ENCODE measurements at regions of chr2 and their contacts with region 1.

Region 1: DNA sequence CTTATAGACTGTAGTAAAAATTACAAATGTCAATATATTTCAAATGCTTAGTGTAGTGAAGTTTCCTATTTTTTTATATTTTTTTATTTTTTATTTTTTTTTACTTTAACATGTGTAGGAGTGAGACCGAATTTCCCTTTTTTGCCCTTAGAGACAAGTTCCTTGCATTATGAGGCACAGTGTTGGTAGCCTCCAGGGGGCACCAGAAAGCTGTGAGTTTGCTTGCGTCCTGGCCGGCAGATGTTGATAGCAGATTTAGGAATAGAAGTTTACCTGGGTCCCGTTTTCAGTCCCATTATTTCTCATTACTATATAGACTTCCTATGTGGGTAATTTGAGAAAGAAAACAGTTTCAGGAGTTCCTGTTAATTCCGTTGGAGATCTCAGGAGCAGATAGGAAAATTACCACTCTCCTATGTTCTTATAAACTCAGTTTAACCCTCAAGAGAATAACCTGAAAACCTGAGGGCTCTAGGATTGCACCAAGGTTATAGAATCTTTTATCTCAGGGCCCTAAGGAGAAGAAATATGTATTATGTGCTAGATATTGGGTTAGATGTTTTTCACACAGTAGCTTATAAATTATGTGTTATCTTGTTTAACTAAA is 157.5 kb upstream of the SESTD1 start:
- DNase-seq: peak; percentile 75
- ATAC-seq: peak; percentile 97
- H3K4me3 ChIP-seq: no peak overlapping the region
- H3K27ac ChIP-seq: no peak overlapping the region
- H3K4me1 ChIP-seq: no peaks in the 10 kb centered on the region
- H3K27me3 ChIP-seq: no peaks in the 10 kb centered on the region
- CTCF ChIP-seq: peak; percentile 88
- EP300 ChIP-seq: no peak
- POLR2A ChIP-seq: no peak
- RAD21 ChIP-seq: peak; percentile 88

Region 2: DNA sequence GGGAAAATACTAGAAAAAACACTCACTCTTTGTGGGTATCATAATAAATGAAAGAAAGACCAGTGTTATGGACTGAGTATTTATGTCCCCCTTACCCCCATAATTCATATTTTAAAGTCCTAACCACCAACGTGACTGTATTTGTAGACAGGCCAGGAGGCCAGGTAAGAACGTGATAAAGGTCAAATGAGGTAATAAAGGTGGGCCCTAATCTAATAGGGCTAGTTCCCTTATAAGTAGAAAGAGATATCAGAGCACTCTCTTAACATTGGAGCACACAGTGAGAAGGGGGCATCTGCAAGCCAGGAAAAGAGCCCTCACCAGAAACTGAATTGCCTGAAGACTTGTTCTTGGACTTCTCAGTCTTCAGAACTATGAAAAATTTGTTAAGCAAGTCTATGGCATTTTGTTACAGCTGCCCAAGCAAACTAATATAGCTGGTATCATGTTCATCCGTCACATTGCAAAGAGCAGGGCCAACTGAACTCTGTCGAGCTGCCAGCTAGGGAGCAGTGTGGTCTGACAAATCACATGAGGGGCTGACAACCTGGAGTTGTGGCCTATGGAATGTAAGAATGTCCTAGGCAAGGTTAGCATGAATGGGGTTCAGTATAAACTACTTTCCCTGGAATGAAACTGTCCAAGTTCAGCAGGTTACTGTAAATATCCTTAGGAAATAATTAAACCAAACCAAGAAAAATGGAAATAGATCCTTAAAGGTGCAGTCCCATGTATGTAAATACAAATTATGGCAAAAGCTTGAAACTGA is 158.4 kb after region 1 on chr2:
- CTCF ChIA-PET with region 1: no interaction called
- POLR2A ChIA-PET with region 1: no interaction called
- in situ Hi-C with region 1: loop called (anchors 10 kb)
- intact Hi-C with region 1: loop called (anchors 1 kb)
- DNase-seq: peak; percentile 91
- ATAC-seq: peak; percentile 98
- H3K4me3 ChIP-seq: no peak overlapping the region
- H3K27ac ChIP-seq: peak overlapping the region; percentile 64
- H3K4me1 ChIP-seq: peaks cover 56% of the 10 kb centered on the region
- H3K27me3 ChIP-seq: no peaks in the 10 kb centered on the region
- CTCF ChIP-seq: peak; percentile 73
- EP300 ChIP-seq: peak in 1 of 2 experiments; percentile 65; a peak in 2 of 4 replicates
- POLR2A ChIP-seq: peak; percentile 41 to 74; a peak in 3 of 4 replicates
- RAD21 ChIP-seq: 0 out of 2 replicates have a peak, but pooled peaks have one; percentile 45

Region 3: GRCh38 chr2:179677077-179677688 is 255.0 kb after region 1 on chr2:
- CTCF ChIA-PET with region 1: no interaction called
- POLR2A ChIA-PET with region 1: no interaction called
- in situ Hi-C with region 1: no loop called
- intact Hi-C with region 1: loop called (anchors 2 kb)
- DNase-seq: no peak
- ATAC-seq: no peak
- H3K4me3 ChIP-seq: no peak overlapping the region
- H3K27ac ChIP-seq: no peak overlapping the region
- H3K4me1 ChIP-seq: no peaks in the 10 kb centered on the region
- H3K27me3 ChIP-seq: no peaks in the 10 kb centered on the region
- CTCF ChIP-seq: no peak
- EP300 ChIP-seq: no peak
- POLR2A ChIP-seq: no peak
- RAD21 ChIP-seq: no peak

Region 4: GRCh38 chr2:179745635-179746256 is 323.6 kb after region 1 on chr2:
- CTCF ChIA-PET with region 1: interaction called, 81 read pairs
- POLR2A ChIA-PET with region 1: no interaction called
- in situ Hi-C with region 1: loop called (anchors 5 kb)
- intact Hi-C with region 1: loop called (anchors 1 kb)
- DNase-seq: no peak
- ATAC-seq: 0 out of 3 replicates have a peak, but pooled peaks have one; percentile 39
- H3K4me3 ChIP-seq: no peak overlapping the region
- H3K27ac ChIP-seq: no peak overlapping the region
- H3K4me1 ChIP-seq: no peaks in the 10 kb centered on the region
- H3K27me3 ChIP-seq: no peaks in the 10 kb centered on the region
- CTCF ChIP-seq: no peak
- EP300 ChIP-seq: no peak
- POLR2A ChIP-seq: no peak
- RAD21 ChIP-seq: no peak

Region 5: DNA sequence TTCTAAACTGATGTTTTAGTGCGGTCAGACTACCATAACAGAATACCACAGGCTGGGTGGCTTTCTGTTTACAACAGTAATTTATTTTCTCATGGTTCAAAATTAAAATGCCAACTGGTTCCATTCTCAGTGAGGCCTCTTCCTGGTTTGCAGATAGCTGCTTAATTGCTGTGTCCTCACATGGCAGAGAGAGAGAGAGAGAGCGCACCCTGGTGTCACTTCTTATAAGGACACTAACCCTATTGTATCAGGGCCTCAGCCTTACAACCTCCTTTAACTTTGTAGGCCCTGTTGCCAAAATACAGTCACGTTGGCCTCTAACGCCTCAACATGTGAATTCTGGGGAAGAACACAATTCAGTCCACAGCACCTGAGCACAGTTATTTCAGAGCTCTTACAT is 476.7 kb after region 1 on chr2:
- CTCF ChIA-PET with region 1: interaction called, 3 read pairs
- POLR2A ChIA-PET with region 1: no interaction called
- in situ Hi-C with region 1: no loop called
- intact Hi-C with region 1: loop called (anchors 5 kb)
- DNase-seq: peak; percentile 65
- ATAC-seq: peak; percentile 100
- H3K4me3 ChIP-seq: no peak overlapping the region
- H3K27ac ChIP-seq: no peak overlapping the region
- H3K4me1 ChIP-seq: no peaks in the 10 kb centered on the region
- H3K27me3 ChIP-seq: no peaks in the 10 kb centered on the region; a peak in 1 of 5 replicates
- CTCF ChIP-seq: peak; percentile 76
- EP300 ChIP-seq: no peak
- POLR2A ChIP-seq: no peak
- RAD21 ChIP-seq: no peak

Measured in HepG2 (cell line).